Endothelial cell of umbilical vein (primary cell): ENCODE measurements at regions of chr6 and their contacts with region 1.

Region 1: DNA sequence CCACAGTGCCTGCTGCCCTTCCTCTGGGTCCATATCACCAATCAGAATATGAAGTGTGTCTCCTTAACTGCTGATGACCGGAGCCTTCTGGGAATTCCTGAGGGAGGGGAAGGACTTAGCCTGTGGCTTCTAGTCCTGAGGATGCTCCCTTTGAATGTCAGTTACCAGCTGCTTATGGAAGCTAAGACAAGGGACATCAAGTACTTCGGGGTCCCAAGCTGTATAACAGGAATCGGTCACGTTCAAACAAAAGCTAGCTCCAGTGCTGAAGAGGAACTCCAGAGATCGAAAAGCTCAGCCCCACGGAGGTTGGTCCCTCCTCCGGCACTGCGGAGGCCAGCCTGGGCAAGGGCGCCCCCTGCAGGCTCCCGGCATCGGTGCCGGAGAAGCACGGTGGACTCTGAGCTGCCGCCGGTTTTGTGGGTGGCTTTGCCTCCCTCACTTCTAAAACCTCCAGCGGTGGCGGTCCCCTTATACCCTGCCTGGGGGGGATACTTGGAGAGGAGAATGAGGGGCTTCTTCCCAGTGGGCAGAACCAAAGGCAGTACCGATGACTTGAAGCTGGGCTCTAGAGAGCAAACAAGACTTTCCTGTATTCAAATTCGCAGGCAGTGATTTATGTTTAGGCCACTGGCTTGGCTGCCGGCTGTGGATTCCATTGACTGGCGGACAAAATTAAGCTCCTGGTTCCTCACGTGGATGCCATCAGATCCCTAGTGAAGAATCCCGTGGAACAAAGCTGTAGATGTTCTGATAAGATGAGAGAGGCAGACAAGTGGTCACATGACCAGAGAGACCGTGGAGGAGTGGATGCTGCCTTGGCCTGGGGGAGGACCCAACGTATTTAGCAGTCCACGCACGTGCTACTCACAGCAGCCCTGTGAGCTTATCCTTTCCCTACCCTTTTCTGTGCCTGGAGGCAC is 16.2 kb upstream of the UBR2 start:
- DNase-seq: peak; percentile 87
- H3K4me3 ChIP-seq: peak overlapping the region; percentile 37 to 84 (median 47)
- H3K27ac ChIP-seq: peak overlapping the region; percentile 5
- H3K4me1 ChIP-seq: peaks cover 2% of the 10 kb centered on the region
- H3K27me3 ChIP-seq: peaks cover 0 to 2% of the 10 kb centered on the region in 2 experiments
- CTCF ChIP-seq: peak; percentile 99 to 100
- POLR2A ChIP-seq: no peak

Region 2: GRCh38 chr6:42166444-42167141 is 381.1 kb before region 1 on chr6:
- CTCF ChIA-PET with region 1: interaction called, 10 read pairs
- POLR2A ChIA-PET with region 1: no interaction called
- dilution Hi-C with region 1: no loop called
- intact Hi-C with region 1: no loop called
- DNase-seq: peak; percentile 72
- H3K4me3 ChIP-seq: no peak overlapping the region
- H3K27ac ChIP-seq: no peak overlapping the region
- H3K4me1 ChIP-seq: no peaks in the 10 kb centered on the region
- H3K27me3 ChIP-seq: peaks cover 0 to 4% of the 10 kb centered on the region in 2 experiments
- CTCF ChIP-seq: peak; percentile 82 to 91
- POLR2A ChIP-seq: no peak

Region 3: GRCh38 chr6:42260972-42261371 is 286.7 kb before region 1 on chr6:
- CTCF ChIA-PET with region 1: interaction called, 174 read pairs
- POLR2A ChIA-PET with region 1: no interaction called
- dilution Hi-C with region 1: no loop called
- intact Hi-C with region 1: loop called (anchors 1 kb)
- DNase-seq: no peak
- H3K4me3 ChIP-seq: no peak overlapping the region
- H3K27ac ChIP-seq: no peak overlapping the region
- H3K4me1 ChIP-seq: peaks cover 12% of the 10 kb centered on the region
- H3K27me3 ChIP-seq: peaks cover 0 to 3% of the 10 kb centered on the region in 2 experiments
- CTCF ChIP-seq: peak; percentile 27 to 56
- POLR2A ChIP-seq: no peak

Region 4: DNA sequence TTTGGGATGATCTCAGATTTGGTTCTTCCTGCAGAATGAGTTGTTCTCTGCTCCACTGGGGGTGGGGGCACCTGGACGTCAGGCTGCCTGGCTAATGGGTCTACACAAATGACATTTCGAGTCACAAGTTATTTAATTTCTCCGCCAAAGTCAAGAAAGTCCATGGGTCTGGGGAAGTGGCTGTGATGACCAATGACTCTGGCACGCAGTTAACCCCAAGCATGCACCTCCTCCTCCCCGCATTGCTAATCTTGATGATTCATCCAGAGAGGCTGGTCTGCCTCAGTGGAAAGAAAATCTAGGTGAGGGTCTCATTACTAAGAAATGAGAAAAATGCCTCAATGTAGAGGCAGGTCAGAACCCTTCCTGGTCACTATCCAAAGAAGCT is 231.7 kb before region 1 on chr6:
- CTCF ChIA-PET with region 1: interaction called, 12 read pairs
- POLR2A ChIA-PET with region 1: no interaction called
- dilution Hi-C with region 1: no loop called
- intact Hi-C with region 1: no loop called
- DNase-seq: peak; percentile 82
- H3K4me3 ChIP-seq: no peak overlapping the region
- H3K27ac ChIP-seq: peak overlapping the region; percentile 51
- H3K4me1 ChIP-seq: peaks cover 21% of the 10 kb centered on the region
- H3K27me3 ChIP-seq: no peaks in the 10 kb centered on the region
- CTCF ChIP-seq: no peak
- POLR2A ChIP-seq: no peak

Region 5: DNA sequence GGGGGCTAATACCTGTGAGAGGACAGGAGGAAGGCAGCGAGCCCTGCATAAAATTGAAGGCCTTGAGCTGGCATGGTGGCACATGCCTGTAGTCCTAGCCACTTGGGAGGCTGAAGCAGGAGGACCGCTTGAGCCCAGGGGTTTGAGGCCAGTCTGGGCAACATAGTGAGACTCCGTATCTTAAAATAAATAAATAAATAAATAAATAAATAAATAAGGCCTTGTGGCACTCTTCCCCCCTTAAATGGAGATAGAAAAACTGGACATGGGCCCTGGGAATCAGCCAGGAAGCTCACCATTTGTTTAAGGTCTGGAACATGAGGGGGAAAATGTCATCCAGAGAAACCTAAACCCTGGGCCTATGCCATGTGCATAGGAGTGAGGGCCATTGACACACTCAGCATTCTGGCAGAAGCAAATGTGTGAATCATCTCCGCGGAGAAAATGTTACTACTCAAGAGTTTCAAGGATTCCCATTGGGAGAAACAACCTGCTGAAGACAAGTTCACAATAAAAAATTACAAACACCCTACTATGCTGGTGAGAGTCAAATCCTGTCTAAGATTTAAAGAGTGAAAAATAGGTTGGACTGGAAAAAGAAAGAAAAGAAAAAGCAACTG is 35.8 kb before region 1 on chr6:
- CTCF ChIA-PET with region 1: interaction called, 25 read pairs
- POLR2A ChIA-PET with region 1: no interaction called
- dilution Hi-C with region 1: no loop called
- intact Hi-C with region 1: no loop called
- DNase-seq: no peak
- H3K4me3 ChIP-seq: no peak overlapping the region
- H3K27ac ChIP-seq: no peak overlapping the region
- H3K4me1 ChIP-seq: no peaks in the 10 kb centered on the region
- H3K27me3 ChIP-seq: peaks cover 0 to 4% of the 10 kb centered on the region in 2 experiments
- CTCF ChIP-seq: no peak
- POLR2A ChIP-seq: no peak

Region 6: DNA sequence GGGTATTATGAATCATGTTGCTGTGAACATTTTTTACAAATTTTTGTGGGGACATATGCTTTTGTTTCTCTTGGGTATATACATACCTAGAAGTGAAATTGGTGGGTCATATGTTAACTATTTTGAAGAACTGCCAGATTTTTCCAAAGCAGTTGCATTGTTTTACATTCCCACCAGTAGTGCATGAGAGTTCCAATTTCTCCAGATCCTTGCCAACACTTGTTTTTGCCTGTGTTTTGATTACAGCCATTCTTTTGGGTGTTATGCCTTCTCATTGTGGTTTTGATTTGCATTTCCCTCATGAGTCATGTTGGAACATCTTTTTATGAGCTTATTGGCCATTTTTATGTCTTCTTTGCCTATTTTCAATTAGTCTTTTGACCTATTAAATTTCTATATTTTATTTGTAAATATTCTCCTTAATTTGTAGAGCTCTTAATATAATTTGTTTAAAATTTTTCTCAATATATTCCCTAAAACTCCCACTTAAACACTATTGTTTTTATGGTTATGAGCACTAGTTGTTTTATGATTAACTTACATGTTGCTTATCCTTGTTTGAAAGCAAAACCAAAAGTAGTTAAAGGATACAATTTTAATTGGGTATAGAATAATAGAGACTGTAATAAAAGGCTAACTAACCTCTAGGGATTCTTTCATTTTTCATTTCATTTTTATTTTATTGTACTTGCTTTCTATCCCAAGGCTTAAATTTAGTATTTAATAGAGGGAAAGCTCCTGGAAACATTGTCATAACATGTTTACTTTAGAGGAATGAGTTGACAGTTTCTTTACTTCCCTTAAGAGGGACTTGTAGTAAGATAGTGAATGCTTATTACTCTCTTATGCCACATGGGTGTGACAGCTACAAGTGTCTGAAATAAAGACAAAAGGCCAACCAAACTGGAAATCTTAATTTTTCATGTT is 21.7 kb after region 1 on chr6:
- CTCF ChIA-PET with region 1: interaction called, 86 read pairs
- POLR2A ChIA-PET with region 1: interaction called, 3 read pairs
- dilution Hi-C with region 1: no loop called
- intact Hi-C with region 1: no loop called
- DNase-seq: peak; percentile 91
- H3K4me3 ChIP-seq: no peak overlapping the region
- H3K27ac ChIP-seq: peak overlapping the region; percentile 0
- H3K4me1 ChIP-seq: peaks cover 16% of the 10 kb centered on the region
- H3K27me3 ChIP-seq: no peaks in the 10 kb centered on the region
- CTCF ChIP-seq: no peak
- POLR2A ChIP-seq: no peak